ENCODE measurements at regions of chr18 and their contacts with region 1.

Region 1: DNA sequence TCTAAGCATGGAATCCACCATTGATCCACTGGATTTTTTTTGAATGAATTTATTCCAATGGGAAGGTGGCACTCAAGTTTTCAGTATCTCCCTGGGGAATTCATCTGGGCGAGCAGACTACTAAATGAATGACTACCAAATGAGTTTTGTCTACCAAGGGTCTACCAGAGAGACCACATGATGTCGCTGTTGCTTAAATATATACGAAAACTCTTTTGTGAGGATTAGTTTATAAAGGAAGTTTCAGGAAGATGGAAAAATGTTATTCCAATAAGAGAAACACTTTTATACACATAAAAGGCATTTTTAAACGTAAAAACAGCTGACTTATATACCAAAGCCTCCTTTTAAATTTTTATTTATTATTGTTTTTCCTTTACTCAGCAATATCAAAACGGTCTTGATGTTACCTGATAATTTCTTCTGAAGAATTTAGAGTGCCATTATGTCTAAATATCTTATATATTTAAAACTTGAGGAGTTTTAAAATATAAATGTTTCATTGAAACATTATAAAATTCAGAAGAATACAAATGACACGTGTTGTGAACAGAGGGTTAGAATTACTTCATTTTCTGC is 139.7 kb downstream of the HRH4 start:
- DNase-seq: peak in 1 of 2 donors; percentile 45
- ATAC-seq: peak in 3 of 8 donors; percentile 35 to 57 (median 42)
- H3K4me3 ChIP-seq: no peak overlapping the region
- H3K27ac ChIP-seq: no peak overlapping the region
- H3K4me1 ChIP-seq: no peaks in the 10 kb centered on the region
- H3K27me3 ChIP-seq: peaks cover 0 to 18% (median 9%) of the 10 kb centered on the region in 7 donors
- CTCF ChIP-seq: peak; percentile 36 to 81 (median 74)

Region 2: DNA sequence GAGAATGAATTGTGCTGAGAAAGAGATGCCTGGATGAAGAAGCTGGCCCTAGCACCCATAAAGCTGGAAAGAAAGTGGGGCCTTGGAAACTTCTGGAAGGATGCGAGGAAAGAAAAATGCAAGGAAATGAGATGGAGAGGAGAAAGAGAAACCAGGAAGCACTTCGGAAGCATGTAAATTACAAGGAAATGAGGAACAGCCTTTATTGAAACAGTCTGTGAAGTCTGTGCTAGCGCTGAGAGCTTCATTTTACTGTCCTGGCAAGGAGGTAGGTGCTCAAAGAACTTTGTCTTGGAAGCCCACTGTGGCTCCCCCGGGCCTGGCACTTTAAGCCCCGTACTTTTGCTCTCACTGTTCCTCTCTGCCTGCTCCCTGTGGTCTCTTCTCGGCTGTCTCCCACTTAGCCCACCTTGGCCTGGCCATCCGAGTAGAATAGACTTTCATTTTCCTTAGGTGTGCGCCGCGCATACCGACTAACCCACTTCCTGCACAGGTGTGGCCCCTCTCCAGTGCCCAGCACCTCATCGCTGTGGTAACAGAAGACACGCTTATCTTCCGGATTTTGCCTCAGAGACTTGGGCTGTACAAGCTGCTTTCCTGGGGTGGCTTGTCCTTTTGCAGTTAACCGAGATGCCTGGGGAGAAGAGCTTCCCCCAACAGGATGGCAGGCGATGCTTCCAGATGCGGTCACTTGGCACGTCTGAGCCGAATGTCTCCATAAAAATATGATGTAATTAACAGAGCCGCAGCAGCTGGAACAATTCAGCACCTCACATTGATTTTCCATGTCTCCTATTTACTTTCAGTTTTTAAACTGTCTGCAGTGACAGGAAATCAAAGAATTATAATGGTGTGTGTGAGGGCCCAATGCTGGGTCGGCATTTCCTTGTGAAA is 59.9 kb after region 1 on chr18:
- intact Hi-C with region 1: loop called in 2 of 10 experiments (anchors 10 kb)
- DNase-seq: peak; percentile 35 to 50
- ATAC-seq: peak in 7 of 8 donors; percentile 51 to 74 (median 60)
- H3K4me3 ChIP-seq: peak overlapping the region; percentile 26 to 58 (median 50)
- H3K27ac ChIP-seq: peak overlapping the region; percentile 27 to 93 (median 79)
- H3K4me1 ChIP-seq: peaks cover 0 to 47% (median 22%) of the 10 kb centered on the region in 9 donors
- H3K27me3 ChIP-seq: peaks cover 0 to 3% (median 0%) of the 10 kb centered on the region in 7 donors
- CTCF ChIP-seq: no peak

Region 3: GRCh38 chr18:24672165-24672941 is 72.2 kb after region 1 on chr18:
- intact Hi-C with region 1: loop called in 8 of 10 experiments (anchors 5 to 10 kb)
- DNase-seq: no peak
- ATAC-seq: no peak
- H3K4me3 ChIP-seq: no peak overlapping the region
- H3K27ac ChIP-seq: no peak overlapping the region
- H3K4me1 ChIP-seq: no peaks in the 10 kb centered on the region
- H3K27me3 ChIP-seq: no peaks in the 10 kb centered on the region
- CTCF ChIP-seq: peak in 7 of 9 donors; percentile 12 to 42 (median 24)

Region 4: GRCh38 chr18:25832001-25832604 is 1231.9 kb after region 1 on chr18:
- intact Hi-C with region 1: loop called in 1 of 10 experiments (anchors 5 kb)
- DNase-seq: peak; percentile 59 to 67
- ATAC-seq: peak; percentile 80 to 93 (median 89)
- H3K4me3 ChIP-seq: no peak overlapping the region
- H3K27ac ChIP-seq: no peak overlapping the region
- H3K4me1 ChIP-seq: peaks cover 0 to 18% (median 6%) of the 10 kb centered on the region in 9 donors
- H3K27me3 ChIP-seq: no peaks in the 10 kb centered on the region
- CTCF ChIP-seq: peak; percentile 57 to 83 (median 78)

Region 5: DNA sequence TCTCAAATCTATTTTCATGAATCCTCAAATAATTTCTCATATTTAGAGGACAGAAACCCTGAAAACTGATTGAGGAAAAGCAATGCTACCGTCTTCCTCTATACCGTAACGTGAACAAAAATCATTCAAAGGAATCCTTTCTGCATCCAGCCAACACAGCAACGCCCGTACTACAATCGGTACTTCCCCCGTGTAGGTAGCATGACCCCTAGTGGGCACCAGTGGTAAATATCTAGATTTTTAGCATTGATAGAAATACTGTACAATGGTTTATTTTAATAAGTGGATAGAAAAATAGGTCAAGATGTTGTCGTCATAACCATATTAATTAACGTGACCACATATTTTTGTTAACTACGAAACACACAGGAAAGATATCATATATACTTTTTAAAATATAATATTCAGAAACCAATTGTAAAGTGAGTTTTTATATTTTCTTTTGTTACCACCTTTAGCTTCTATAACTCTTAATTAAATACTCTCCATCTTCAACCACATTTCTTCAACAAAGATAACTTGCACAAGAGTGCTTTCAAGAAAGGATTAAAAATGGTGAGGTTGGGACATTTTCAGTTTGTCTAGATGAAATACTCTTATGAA is 1296.1 kb after region 1 on chr18:
- intact Hi-C with region 1: loop called in 1 of 10 experiments (anchors 10 kb)
- DNase-seq: peak in 1 of 2 donors; percentile 9
- ATAC-seq: no peak
- H3K4me3 ChIP-seq: no peak overlapping the region
- H3K27ac ChIP-seq: no peak overlapping the region
- H3K4me1 ChIP-seq: no peaks in the 10 kb centered on the region
- H3K27me3 ChIP-seq: peaks cover 0 to 5% (median 0%) of the 10 kb centered on the region in 7 donors
- CTCF ChIP-seq: peak; percentile 61 to 80 (median 75)